ENCODE measurements at regions of chr3 and their contacts with region 1.

Region 1: GRCh38 chr3:72818092-72818773 is 30.0 kb downstream of the SHQ1 start:
- DNase-seq: peak; percentile 21
- ATAC-seq: no peak
- H3K4me3 ChIP-seq: no peak overlapping the region
- H3K4me3 Mint-ChIP-seq: no peak overlapping the region
- H3K27ac ChIP-seq: no peak overlapping the region
- H3K27ac Mint-ChIP-seq: no peak overlapping the region
- H3K4me1 ChIP-seq: peaks cover 25 to 29% of the 10 kb centered on the region in 2 donors
- H3K4me1 Mint-ChIP-seq: peaks cover 19% of the 10 kb centered on the region
- H3K27me3 ChIP-seq: no peaks in the 10 kb centered on the region
- H3K27me3 Mint-ChIP-seq: no peaks in the 10 kb centered on the region
- CTCF ChIP-seq: no peak

Region 2: DNA sequence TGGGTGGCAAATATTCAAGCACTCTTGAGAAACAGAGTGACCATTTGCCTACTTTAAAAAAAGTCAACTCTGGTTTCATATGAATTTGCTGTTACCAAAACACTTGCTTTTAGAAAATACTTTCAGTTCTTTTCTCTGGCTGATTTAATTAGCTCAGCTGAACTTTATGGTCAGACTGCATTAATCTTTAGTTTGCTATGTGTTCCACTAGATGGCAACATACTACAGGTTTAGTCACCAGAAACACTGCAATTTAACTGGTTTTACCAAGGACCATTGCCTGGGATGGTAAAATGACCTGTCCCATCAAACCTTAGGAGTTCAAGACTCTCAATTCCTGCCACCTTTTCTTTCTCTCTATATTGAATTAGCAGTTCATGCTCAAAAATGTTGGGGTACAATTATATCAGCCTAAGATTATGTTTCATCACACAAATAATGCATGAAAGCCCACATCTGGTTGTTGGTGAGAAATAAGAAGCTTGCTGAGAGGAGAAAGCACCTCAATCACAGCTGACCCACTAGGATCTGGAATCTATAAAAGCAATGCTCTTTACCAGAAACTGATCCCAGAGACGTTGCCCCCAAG is 1107.2 kb before region 1 on chr3:
- CTCF ChIA-PET with region 1: interaction called, 35 read pairs
- POLR2A ChIA-PET with region 1: no interaction called
- intact Hi-C with region 1: loop called (anchors 1 kb)
- DNase-seq: peak; percentile 56
- ATAC-seq: peak; percentile 21
- H3K4me3 ChIP-seq: no peak overlapping the region
- H3K4me3 Mint-ChIP-seq: no peak overlapping the region
- H3K27ac ChIP-seq: no peak overlapping the region
- H3K27ac Mint-ChIP-seq: no peak overlapping the region
- H3K4me1 ChIP-seq: no peaks in the 10 kb centered on the region
- H3K4me1 Mint-ChIP-seq: no peaks in the 10 kb centered on the region
- H3K27me3 ChIP-seq: peaks cover 0 to 3% (median 0%) of the 10 kb centered on the region in 4 experiments
- H3K27me3 Mint-ChIP-seq: no peaks in the 10 kb centered on the region
- CTCF ChIP-seq: peak; percentile 77

Region 3: GRCh38 chr3:71875461-71875947 is 942.7 kb before region 1 on chr3:
- CTCF ChIA-PET with region 1: interaction called, 208 read pairs
- POLR2A ChIA-PET with region 1: no interaction called
- intact Hi-C with region 1: loop called (anchors 1 kb)
- DNase-seq: peak; percentile 88
- ATAC-seq: peak; percentile 99
- H3K4me3 ChIP-seq: no peak overlapping the region
- H3K4me3 Mint-ChIP-seq: no peak overlapping the region
- H3K27ac ChIP-seq: no peak overlapping the region
- H3K27ac Mint-ChIP-seq: no peak overlapping the region
- H3K4me1 ChIP-seq: peaks cover 5 to 10% of the 10 kb centered on the region in 2 donors
- H3K4me1 Mint-ChIP-seq: peaks cover 17% of the 10 kb centered on the region
- H3K27me3 ChIP-seq: peaks cover 0 to 30% (median 20%) of the 10 kb centered on the region in 4 experiments
- H3K27me3 Mint-ChIP-seq: peaks cover 42% of the 10 kb centered on the region
- CTCF ChIP-seq: peak; percentile 88

Region 4: GRCh38 chr3:71955240-71956068 is 862.8 kb before region 1 on chr3:
- CTCF ChIA-PET with region 1: interaction called, 54 read pairs
- POLR2A ChIA-PET with region 1: no interaction called
- intact Hi-C with region 1: loop called (anchors 1 kb)
- DNase-seq: peak; percentile 51
- ATAC-seq: peak; percentile 21
- H3K4me3 ChIP-seq: no peak overlapping the region
- H3K4me3 Mint-ChIP-seq: no peak overlapping the region
- H3K27ac ChIP-seq: no peak overlapping the region
- H3K27ac Mint-ChIP-seq: no peak overlapping the region
- H3K4me1 ChIP-seq: peaks cover 7 to 11% of the 10 kb centered on the region in 2 donors
- H3K4me1 Mint-ChIP-seq: peaks cover 10% of the 10 kb centered on the region
- H3K27me3 ChIP-seq: peaks cover 0 to 21% (median 5%) of the 10 kb centered on the region in 4 experiments
- H3K27me3 Mint-ChIP-seq: peaks cover 6% of the 10 kb centered on the region
- CTCF ChIP-seq: no peak

Region 5: DNA sequence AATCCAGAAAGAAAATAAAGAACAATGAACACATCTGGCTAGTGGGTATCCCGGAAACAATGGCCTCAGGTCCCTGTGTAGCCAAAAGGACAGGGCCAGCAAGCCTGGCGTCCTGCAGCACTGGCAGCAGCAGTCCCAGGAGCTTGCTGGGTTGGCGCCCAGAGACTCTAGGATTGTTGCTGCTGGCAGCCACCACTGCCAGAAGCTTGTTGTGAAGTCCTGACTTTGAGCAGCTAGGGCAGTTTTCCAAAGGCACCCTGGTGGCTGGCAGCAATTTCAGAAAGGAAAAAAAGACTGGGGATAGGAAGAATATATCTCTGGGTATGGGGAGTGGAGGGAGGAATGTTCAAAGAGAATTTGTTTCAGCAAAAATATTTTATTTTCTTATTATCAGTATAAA is 18.7 kb after region 1 on chr3:
- CTCF ChIA-PET with region 1: interaction called, 12 read pairs
- POLR2A ChIA-PET with region 1: interaction called, 4 read pairs
- intact Hi-C with region 1: no loop called
- DNase-seq: no peak
- ATAC-seq: no peak
- H3K4me3 ChIP-seq: no peak overlapping the region
- H3K4me3 Mint-ChIP-seq: no peak overlapping the region
- H3K27ac ChIP-seq: no peak overlapping the region
- H3K27ac Mint-ChIP-seq: no peak overlapping the region
- H3K4me1 ChIP-seq: no peaks in the 10 kb centered on the region
- H3K4me1 Mint-ChIP-seq: no peaks in the 10 kb centered on the region
- H3K27me3 ChIP-seq: no peaks in the 10 kb centered on the region
- H3K27me3 Mint-ChIP-seq: no peaks in the 10 kb centered on the region
- CTCF ChIP-seq: no peak

Measured in B cell (primary cell).